ENCODE measurements at regions of chr9 and their contacts with region 1.

Region 1: GRCh38 chr9:75238311-75238978 is 150.1 kb downstream of the OSTF1 start:
- DNase-seq: peak; percentile 78
- H3K4me3 ChIP-seq: no peak overlapping the region
- H3K27ac ChIP-seq: no peak overlapping the region
- H3K4me1 ChIP-seq: no peaks in the 10 kb centered on the region
- H3K27me3 ChIP-seq: no peaks in the 10 kb centered on the region
- CTCF ChIP-seq: peak; percentile 40 to 91 (median 74)
- POLR2A ChIP-seq: no peak

Region 2: GRCh38 chr9:75053869-75054268 is 184.6 kb before region 1 on chr9:
- intact Hi-C with region 1: no loop called
- DNase-seq: no peak
- H3K4me3 ChIP-seq: no peak overlapping the region
- H3K27ac ChIP-seq: no peak overlapping the region
- H3K4me1 ChIP-seq: no peaks in the 10 kb centered on the region
- H3K27me3 ChIP-seq: no peaks in the 10 kb centered on the region
- CTCF ChIP-seq: no peak
- POLR2A ChIP-seq: no peak

Region 3: GRCh38 chr9:75200892-75201470 is 37.5 kb before region 1 on chr9:
- intact Hi-C with region 1: loop called (anchors 1 kb)
- DNase-seq: peak; percentile 36
- H3K4me3 ChIP-seq: no peak overlapping the region
- H3K27ac ChIP-seq: no peak overlapping the region
- H3K4me1 ChIP-seq: no peaks in the 10 kb centered on the region
- H3K27me3 ChIP-seq: no peaks in the 10 kb centered on the region
- CTCF ChIP-seq: peak; percentile 38 to 84 (median 76)
- POLR2A ChIP-seq: no peak